Heart left ventricle (tissue), 16 donors: ENCODE measurements at regions of chr9 and their contacts with region 1.

Region 1: GRCh38 chr9:114229295-114229694 is 74.0 kb downstream of the COL27A1 start:
- DNase-seq: no peak
- ATAC-seq: no peak
- H3K4me3 ChIP-seq: no peak overlapping the region
- H3K27ac ChIP-seq: no peak overlapping the region
- H3K4me1 ChIP-seq: peaks cover 0 to 28% (median 4%) of the 10 kb centered on the region in 12 donors
- H3K27me3 ChIP-seq: no peaks in the 10 kb centered on the region
- CTCF ChIP-seq: no peak
- POLR2A ChIP-seq: no peak

Region 2: GRCh38 chr9:114141553-114142402 is 87.5 kb before region 1 on chr9:
- intact Hi-C with region 1: no loop called
- DNase-seq: peak in 1 of 5 donors; percentile 60
- ATAC-seq: peak in 2 of 4 donors; percentile 16 to 50
- H3K4me3 ChIP-seq: no peak overlapping the region
- H3K27ac ChIP-seq: peak overlapping the region in 7 of 12 donors; percentile 18 to 56 (median 38)
- H3K4me1 ChIP-seq: peaks cover 0 to 34% (median 25%) of the 10 kb centered on the region in 12 donors
- H3K27me3 ChIP-seq: peaks cover 0 to 3% (median 0%) of the 10 kb centered on the region in 9 donors
- CTCF ChIP-seq: no peak
- POLR2A ChIP-seq: no peak

Region 3: GRCh38 chr9:114189823-114190562 is 39.3 kb before region 1 on chr9:
- intact Hi-C with region 1: loop called in 1 of 10 experiments (anchors 2 kb)
- DNase-seq: peak in 1 of 5 donors; percentile 13
- ATAC-seq: no peak
- H3K4me3 ChIP-seq: no peak overlapping the region
- H3K27ac ChIP-seq: no peak overlapping the region
- H3K4me1 ChIP-seq: peaks cover 0 to 5% (median 0%) of the 10 kb centered on the region in 12 donors
- H3K27me3 ChIP-seq: no peaks in the 10 kb centered on the region
- CTCF ChIP-seq: no peak
- POLR2A ChIP-seq: no peak

Region 4: GRCh38 chr9:114304416-114305188 is 75.3 kb after region 1 on chr9:
- intact Hi-C with region 1: no loop called
- DNase-seq: peak in 2 of 5 donors; percentile 3
- ATAC-seq: no peak
- H3K4me3 ChIP-seq: no peak overlapping the region
- H3K27ac ChIP-seq: no peak overlapping the region
- H3K4me1 ChIP-seq: peaks cover 0 to 6% (median 2%) of the 10 kb centered on the region in 12 donors
- H3K27me3 ChIP-seq: no peaks in the 10 kb centered on the region
- CTCF ChIP-seq: no peak
- POLR2A ChIP-seq: no peak